Right cardiac atrium (tissue), 5 donors: ENCODE measurements at regions of chr14 and their contacts with region 1.

Region 1: DNA sequence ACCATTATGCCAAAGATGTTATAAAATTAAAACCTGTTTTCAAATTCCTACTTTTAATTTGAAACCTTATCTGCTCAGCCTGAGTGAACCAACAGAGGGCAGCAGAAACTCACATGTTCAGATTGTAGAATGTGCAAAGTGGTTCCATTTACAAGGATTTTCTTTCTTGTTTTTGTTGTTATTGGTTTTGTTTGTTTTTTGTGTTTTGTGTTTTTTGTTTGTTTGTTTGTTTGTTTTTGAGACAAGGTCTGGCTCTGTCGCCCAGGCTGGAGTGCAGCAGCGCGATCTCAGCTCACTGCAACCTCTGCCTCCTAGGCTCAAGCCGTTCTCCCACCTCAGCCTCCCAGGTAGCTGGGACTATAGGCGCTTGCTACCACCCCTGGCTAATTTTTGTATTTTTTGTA is 22.8 kb upstream of the GARIN2 start:
- DNase-seq: no peak
- ATAC-seq: no peak
- H3K4me3 ChIP-seq: no peak overlapping the region
- H3K27ac ChIP-seq: no peak overlapping the region
- H3K4me1 ChIP-seq: no peaks in the 10 kb centered on the region
- H3K27me3 ChIP-seq: no peaks in the 10 kb centered on the region

Region 2: DNA sequence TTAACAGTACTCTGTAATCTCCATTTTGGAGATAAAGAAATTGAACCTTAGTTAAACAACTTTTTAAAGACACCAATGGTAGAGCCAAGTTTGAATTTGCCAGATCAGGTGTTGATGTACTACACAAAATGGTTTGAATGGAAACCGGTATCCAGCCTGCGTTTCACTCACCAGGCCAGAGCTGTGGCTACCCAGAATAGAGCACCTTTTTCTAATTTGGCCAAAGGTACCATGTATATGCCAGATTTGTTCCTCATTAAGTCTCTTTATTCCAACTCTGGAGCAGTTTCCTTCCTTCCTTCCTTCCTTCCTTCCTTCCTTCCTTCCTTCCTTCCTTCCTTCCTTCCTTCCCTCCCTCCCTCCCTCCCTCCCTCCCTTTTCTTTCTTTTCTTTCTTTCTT is 114.1 kb after region 1 on chr14:
- intact Hi-C with region 1: loop called in 2 of 4 experiments (anchors 5 kb)
- DNase-seq: no peak
- ATAC-seq: no peak
- H3K4me3 ChIP-seq: no peak overlapping the region
- H3K27ac ChIP-seq: no peak overlapping the region
- H3K4me1 ChIP-seq: peaks cover 2% of the 10 kb centered on the region
- H3K27me3 ChIP-seq: no peaks in the 10 kb centered on the region

Region 3: GRCh38 chr14:67285876-67286452 is 119.5 kb after region 1 on chr14:
- intact Hi-C with region 1: loop called (anchors 2 to 5 kb)
- DNase-seq: no peak
- ATAC-seq: no peak
- H3K4me3 ChIP-seq: no peak overlapping the region
- H3K27ac ChIP-seq: no peak overlapping the region
- H3K4me1 ChIP-seq: no peaks in the 10 kb centered on the region
- H3K27me3 ChIP-seq: no peaks in the 10 kb centered on the region